Activated T-helper 2 cell treated with anti-CD3 and anti-CD28 coated beads, Interferon-gamma antibody, Interleukin-2, Interleukin-4, amounts not matched to agents 10 μg/mL and 5 μg/mL and 100 μg/mL, durations not matched to agents 14 hours and 24 hours and 36 hours (primary cell): ENCODE measurements at regions of chr17 and their contacts with region 1.

Region 1: GRCh38 chr17:66906321-66907278 is 57.9 kb upstream of the CACNG4 start:
- DNase-seq: peak; percentile 46
- H3K4me3 Mint-ChIP-seq: no peak overlapping the region
- H3K27ac Mint-ChIP-seq: no peak overlapping the region
- H3K4me1 Mint-ChIP-seq: peaks cover 5% of the 10 kb centered on the region
- H3K27me3 Mint-ChIP-seq: peaks cover 6% of the 10 kb centered on the region

Region 2: GRCh38 chr17:66715745-66716156 is 190.8 kb before region 1 on chr17:
- intact Hi-C with region 1: loop called (anchors 2 kb)
- DNase-seq: no peak
- H3K4me3 Mint-ChIP-seq: no peak overlapping the region
- H3K27ac Mint-ChIP-seq: peak overlapping the region; percentile 15
- H3K4me1 Mint-ChIP-seq: peaks cover 26% of the 10 kb centered on the region
- H3K27me3 Mint-ChIP-seq: no peaks in the 10 kb centered on the region

Region 3: GRCh38 chr17:66964930-66965800 is 58.6 kb after region 1 on chr17:
- intact Hi-C with region 1: no loop called
- DNase-seq: no peak
- H3K4me3 Mint-ChIP-seq: peak overlapping the region; percentile 51
- H3K27ac Mint-ChIP-seq: no peak overlapping the region
- H3K4me1 Mint-ChIP-seq: peaks cover 3% of the 10 kb centered on the region
- H3K27me3 Mint-ChIP-seq: peaks cover 57% of the 10 kb centered on the region

Region 4: GRCh38 chr17:67035131-67036083 is 128.8 kb after region 1 on chr17:
- intact Hi-C with region 1: no loop called
- DNase-seq: no peak
- H3K4me3 Mint-ChIP-seq: no peak overlapping the region
- H3K27ac Mint-ChIP-seq: no peak overlapping the region
- H3K4me1 Mint-ChIP-seq: peaks cover 4% of the 10 kb centered on the region
- H3K27me3 Mint-ChIP-seq: no peaks in the 10 kb centered on the region